Posterior vena cava (tissue), 2 donors: ENCODE measurements at regions of chr4 and their contacts with region 1.

Region 1: DNA sequence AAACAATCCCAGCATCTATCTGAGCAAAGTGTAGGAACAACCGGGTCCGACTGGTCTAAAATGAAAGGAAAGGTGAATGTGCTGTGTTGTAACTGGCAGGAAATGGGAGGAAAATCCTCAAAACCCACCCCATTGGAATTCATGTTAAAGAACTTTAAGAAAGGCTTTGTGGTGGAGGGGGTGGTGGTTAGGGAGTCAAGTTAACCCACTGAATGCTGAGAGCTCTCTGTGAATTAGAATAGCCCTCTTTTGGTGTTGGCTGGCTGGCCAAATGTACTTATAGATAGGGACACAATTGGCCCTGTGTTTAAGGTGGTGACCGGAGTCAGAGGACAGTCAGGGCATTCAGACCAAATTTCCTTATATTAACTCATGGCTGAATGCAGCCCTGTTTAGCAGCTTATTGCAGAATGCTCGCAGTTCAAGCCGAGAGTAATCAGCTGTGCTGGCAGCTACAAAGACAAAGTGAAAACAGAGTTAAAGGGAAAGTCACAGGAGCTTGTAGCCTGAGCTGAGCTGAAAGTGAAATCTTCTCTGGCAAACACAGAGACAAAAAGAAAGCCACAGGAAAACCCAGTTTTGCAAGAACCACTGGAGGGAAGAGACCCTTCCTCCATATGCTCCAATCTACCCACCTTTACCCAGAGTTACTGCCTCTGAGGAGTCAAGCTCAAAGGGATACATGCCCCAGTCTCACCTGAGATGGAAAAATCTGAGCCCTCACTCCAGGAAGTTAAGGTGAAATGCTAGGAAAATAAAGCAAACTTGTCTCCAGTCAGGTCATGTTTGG is 38.5 kb upstream of the UGT2B7 start:
- DNase-seq: no peak

Region 2: DNA sequence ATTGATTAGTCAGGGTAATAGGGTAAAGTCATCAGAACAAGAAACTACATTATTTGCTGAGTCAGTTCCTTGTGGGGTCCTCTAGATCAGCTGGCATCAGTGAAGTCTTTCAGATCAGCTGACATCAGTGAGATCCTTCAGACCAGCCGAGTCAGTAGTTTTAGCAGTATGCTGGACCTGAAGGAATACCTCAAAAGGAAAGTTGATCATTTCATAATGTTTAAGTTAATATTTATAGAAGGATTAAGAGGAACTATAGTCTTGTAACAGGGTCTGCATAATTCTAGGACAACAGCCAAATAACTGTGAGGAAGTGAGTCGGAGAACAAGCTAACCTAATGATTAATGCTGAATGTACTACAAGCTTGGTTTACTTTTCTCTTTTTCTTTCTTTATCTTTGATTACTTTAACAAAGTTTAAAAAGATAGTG is 37.5 kb after region 1 on chr4:
- intact Hi-C with region 1: no loop called
- DNase-seq: no peak

Region 3: DNA sequence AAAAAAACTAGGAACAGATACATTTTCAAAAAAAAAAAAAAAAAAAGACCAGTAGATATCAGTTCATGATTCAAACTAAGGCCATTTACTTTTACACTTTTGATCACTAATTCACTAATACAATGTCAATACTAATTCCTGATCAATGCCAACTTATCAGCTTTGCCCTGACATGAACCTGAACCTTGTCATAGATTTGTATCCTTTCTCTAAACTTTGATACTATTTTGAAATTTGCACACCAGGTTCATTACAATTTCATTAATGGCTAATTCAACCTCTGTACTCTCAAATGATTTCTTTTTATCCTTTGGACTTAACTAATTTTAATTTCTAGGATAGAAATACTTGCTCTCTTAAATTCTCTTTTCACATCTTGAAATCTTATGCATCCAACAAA is 76.2 kb after region 1 on chr4:
- intact Hi-C with region 1: loop called in 1 of 2 experiments (anchors 2 kb)
- DNase-seq: no peak

Region 4: GRCh38 chr4:69167300-69167699 is 109.5 kb after region 1 on chr4:
- intact Hi-C with region 1: no loop called
- DNase-seq: no peak